Activated CD8-positive, alpha-beta T cell treated with anti-CD3 and anti-CD28 coated beads for 36 hours (primary cell): ENCODE measurements at regions of chr2 and their contacts with region 1.

Region 1: GRCh38 chr2:146108993-146109392 is 1589.1 kb upstream of the ZEB2 start:
- DNase-seq: no peak
- ATAC-seq: no peak
- H3K4me3 Mint-ChIP-seq: no peak overlapping the region
- H3K27ac Mint-ChIP-seq: no peak overlapping the region
- H3K4me1 Mint-ChIP-seq: no peaks in the 10 kb centered on the region
- H3K27me3 Mint-ChIP-seq: no peaks in the 10 kb centered on the region
- CTCF ChIP-seq: no peak

Region 2: DNA sequence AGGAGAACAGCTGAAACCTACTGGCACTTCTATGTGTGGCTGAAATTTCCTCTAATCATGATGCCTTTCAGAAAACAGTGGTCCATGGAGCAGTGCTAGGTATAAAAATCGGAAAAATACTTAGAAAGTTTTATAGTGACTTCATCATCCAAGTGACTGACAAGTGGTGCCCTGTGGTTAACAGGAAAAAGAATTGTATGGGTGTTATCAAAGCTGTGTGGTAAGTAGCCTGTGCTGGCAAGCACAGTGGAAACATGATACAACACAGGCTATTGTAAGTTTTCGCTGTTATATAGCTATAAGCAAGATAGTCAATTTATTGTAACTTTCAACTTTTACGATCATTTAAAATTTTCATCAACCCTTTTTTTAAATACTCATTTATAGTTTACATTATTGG is 10.6 kb after region 1 on chr2:
- CTCF ChIA-PET with region 1: no interaction called
- POLR2A ChIA-PET with region 1: no interaction called
- intact Hi-C with region 1: loop called (anchors 1 kb)
- DNase-seq: no peak
- ATAC-seq: no peak
- H3K4me3 Mint-ChIP-seq: no peak overlapping the region
- H3K27ac Mint-ChIP-seq: no peak overlapping the region
- H3K4me1 Mint-ChIP-seq: no peaks in the 10 kb centered on the region
- H3K27me3 Mint-ChIP-seq: no peaks in the 10 kb centered on the region
- CTCF ChIP-seq: no peak